ENCODE measurements at regions of chr20 and their contacts with region 1.

Region 1: GRCh38 chr20:31572701-31573554 is 32.2 kb upstream of the ID1 start:
- DNase-seq: peak; percentile 97
- H3K4me3 ChIP-seq: peak overlapping the region; percentile 57
- H3K27ac ChIP-seq: peak overlapping the region; percentile 95
- H3K27me3 ChIP-seq: no peaks in the 10 kb centered on the region
- CTCF ChIP-seq: no peak

Region 2: DNA sequence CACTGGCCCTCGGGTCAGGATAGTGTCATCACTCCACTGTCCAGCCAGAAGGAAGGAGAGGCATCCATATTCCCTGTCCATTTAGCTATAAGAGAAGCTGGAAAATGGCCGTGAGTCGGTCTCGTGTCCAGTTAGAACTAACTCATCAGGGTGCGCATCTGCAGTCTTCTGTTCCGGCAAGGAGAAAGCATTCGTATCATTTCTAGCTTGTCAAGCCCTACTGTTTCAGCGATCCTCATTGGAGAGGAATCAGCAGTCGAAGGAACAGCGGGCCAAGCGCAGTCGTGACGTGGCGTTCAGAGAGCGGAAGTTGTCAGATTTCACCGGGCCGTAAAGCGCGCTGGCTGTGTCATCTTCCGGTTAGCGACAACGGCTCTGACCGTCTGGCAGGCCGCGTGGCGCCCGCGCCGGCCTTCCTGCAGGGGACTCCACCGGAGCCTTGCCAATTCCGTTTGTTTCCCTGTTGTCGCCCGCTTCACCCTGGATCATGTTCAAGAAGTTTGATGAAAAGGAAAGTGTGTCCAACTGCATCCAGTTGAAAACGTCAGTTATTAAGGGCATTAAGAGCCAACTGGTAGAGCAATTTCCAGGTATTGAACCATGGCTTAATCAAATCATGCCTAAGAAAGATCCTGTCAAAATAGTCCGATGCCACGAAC is 25.8 kb before region 1 on chr20:
- CTCF ChIA-PET with region 1: interaction called, 5 read pairs
- POLR2A ChIA-PET with region 1: interaction called, 10 read pairs
- DNase-seq: peak; percentile 65
- H3K4me3 ChIP-seq: peak overlapping the region; percentile 49
- H3K27ac ChIP-seq: peak overlapping the region; percentile 90
- H3K27me3 ChIP-seq: no peaks in the 10 kb centered on the region
- CTCF ChIP-seq: no peak

Region 3: GRCh38 chr20:31555203-31555775 is 17.6 kb before region 1 on chr20:
- CTCF ChIA-PET with region 1: interaction called, 148 read pairs
- POLR2A ChIA-PET with region 1: interaction called, 17 read pairs
- DNase-seq: no peak
- H3K4me3 ChIP-seq: no peak overlapping the region
- H3K27ac ChIP-seq: peak overlapping the region; percentile 21
- H3K27me3 ChIP-seq: no peaks in the 10 kb centered on the region
- CTCF ChIP-seq: no peak

Region 4: GRCh38 chr20:31595654-31596411 is 22.9 kb after region 1 on chr20:
- CTCF ChIA-PET with region 1: interaction called, 8 read pairs
- POLR2A ChIA-PET with region 1: interaction called, 22 read pairs
- DNase-seq: peak; percentile 68
- H3K4me3 ChIP-seq: no peak overlapping the region
- H3K27ac ChIP-seq: peak overlapping the region; percentile 82
- H3K27me3 ChIP-seq: no peaks in the 10 kb centered on the region
- CTCF ChIP-seq: no peak

Region 5: GRCh38 chr20:31605031-31605901 is 32.3 kb after region 1 on chr20 and contains the start of gene ID1:
- CTCF ChIA-PET with region 1: interaction called, 1,107 read pairs
- POLR2A ChIA-PET with region 1: interaction called, 131 read pairs
- DNase-seq: peak; percentile 78
- H3K4me3 ChIP-seq: peak within 1 kb of the TSS; percentile 90
- H3K27ac ChIP-seq: peak within 1 kb of the TSS; percentile 70
- H3K27me3 ChIP-seq: no peaks in the 10 kb centered on the region
- CTCF ChIP-seq: no peak
- polyA plus RNA-seq, gene ID1: 7.8 and 11.1 TPM in 2 replicates

Measured in AG04450 (cell line).